Activated B cell treated with CpG ODN at 0.5 μM for 24 hours (primary cell): ENCODE measurements at regions of chr1 and their contacts with region 1.

Region 1: GRCh38 chr1:3668585-3669300 is 16.4 kb downstream of the TP73 start:
- DNase-seq: no peak
- ATAC-seq: no peak
- H3K4me3 Mint-ChIP-seq: no peak overlapping the region
- H3K27ac Mint-ChIP-seq: peak overlapping the region; percentile 15
- H3K4me1 Mint-ChIP-seq: peaks cover 69% of the 10 kb centered on the region
- H3K27me3 Mint-ChIP-seq: no peaks in the 10 kb centered on the region
- CTCF ChIP-seq: no peak

Region 2: DNA sequence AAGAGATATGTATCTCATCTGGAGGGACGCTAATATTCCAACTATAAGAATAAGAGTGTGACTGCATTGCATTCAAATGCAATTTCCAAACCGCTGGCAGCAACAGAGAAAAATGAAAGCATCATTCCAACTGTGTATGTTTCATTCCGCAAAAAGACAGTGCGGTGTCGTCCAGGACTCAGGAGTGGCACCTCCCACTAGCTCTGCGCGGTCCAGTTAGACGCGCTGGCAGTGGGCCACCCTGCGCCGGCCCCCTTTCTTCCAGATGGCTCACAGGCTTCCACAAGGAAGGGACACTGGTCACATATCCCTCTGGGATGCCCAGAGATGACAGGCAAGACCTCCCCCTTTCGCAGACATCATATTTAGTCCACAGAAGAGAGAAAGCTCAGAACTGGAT is 30.7 kb before region 1 on chr1:
- CTCF ChIA-PET with region 1: no interaction called
- POLR2A ChIA-PET with region 1: interaction called, 14 read pairs
- intact Hi-C with region 1: no loop called
- DNase-seq: no peak
- ATAC-seq: no peak
- H3K4me3 Mint-ChIP-seq: no peak overlapping the region
- H3K27ac Mint-ChIP-seq: no peak overlapping the region
- H3K4me1 Mint-ChIP-seq: no peaks in the 10 kb centered on the region
- H3K27me3 Mint-ChIP-seq: no peaks in the 10 kb centered on the region
- CTCF ChIP-seq: no peak

Region 3: GRCh38 chr1:3649342-3650247 is 19.1 kb before region 1 on chr1 and contains the start of gene WRAP73:
- CTCF ChIA-PET with region 1: interaction called, 3 read pairs
- POLR2A ChIA-PET with region 1: interaction called, 9 read pairs
- intact Hi-C with region 1: loop called (anchors 1 kb)
- DNase-seq: peak; percentile 84
- ATAC-seq: peak; percentile 97
- H3K4me3 Mint-ChIP-seq: peak within 1 kb of the TSS; percentile 82
- H3K27ac Mint-ChIP-seq: no peak within 1 kb of the TSS
- H3K4me1 Mint-ChIP-seq: peaks cover 29% of the 10 kb centered on the region
- H3K27me3 Mint-ChIP-seq: peaks cover 16% of the 10 kb centered on the region
- CTCF ChIP-seq: no peak
- total RNA-seq, gene WRAP73: 27.0 and 30.1 TPM in 2 replicates

Region 4: GRCh38 chr1:3656450-3657095 is 12.2 kb before region 1 on chr1:
- CTCF ChIA-PET with region 1: no interaction called
- POLR2A ChIA-PET with region 1: interaction called, 42 read pairs
- intact Hi-C with region 1: loop called (anchors 1 kb)
- DNase-seq: no peak
- ATAC-seq: peak; percentile 68
- H3K4me3 Mint-ChIP-seq: peak overlapping the region; percentile 42
- H3K27ac Mint-ChIP-seq: peak overlapping the region; percentile 68
- H3K4me1 Mint-ChIP-seq: peaks cover 30% of the 10 kb centered on the region
- H3K27me3 Mint-ChIP-seq: peaks cover 32% of the 10 kb centered on the region
- CTCF ChIP-seq: no peak